ENCODE measurements at regions of chr19 and their contacts with region 1.

Region 1: DNA sequence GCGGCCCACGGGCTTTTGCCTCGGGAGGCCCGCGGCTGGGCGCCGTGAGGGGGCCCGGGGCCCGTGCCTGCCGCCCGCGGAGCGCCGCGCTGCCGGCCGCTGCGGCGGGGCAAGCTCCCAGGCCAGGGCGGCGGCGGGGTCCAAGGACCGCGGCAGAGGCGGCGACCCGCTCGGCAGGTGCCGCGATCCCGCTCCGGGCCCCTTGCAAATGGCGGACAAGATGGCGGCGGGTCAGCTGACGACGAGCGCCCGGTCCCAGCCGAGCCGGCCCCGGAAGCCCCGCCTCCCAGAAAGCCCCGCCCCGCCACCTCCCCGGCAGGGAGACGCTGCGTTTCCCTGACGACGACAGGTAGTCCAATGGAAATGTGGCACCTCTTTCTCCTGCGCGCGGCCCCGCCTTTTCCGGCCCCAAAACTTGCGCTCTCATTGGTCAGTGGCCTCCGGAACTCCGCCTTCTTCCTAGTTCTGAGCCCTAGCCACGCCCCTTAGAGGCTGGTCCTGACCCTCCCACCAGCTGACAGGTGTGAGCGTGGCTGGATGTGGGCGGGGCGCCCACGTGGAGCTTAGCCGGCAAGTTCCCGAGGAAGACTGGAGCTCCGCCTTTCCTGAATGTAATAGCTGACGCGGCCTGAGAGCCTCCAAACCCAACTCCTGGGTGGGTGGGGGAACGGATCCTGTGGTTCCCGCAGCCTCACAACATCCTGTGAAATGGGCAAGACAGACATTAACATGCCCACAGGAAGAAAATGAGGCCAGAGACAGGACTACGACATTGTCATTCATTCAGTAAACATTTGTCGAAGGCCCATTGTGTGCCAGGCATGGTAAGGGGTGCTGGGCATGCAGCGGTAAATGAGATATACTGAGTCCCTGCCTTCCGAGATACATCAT is at the start of gene AP3D1:
- DNase-seq: peak; percentile 100
- H3K4me3 Mint-ChIP-seq: peak within 1 kb of the TSS; percentile 84
- H3K27ac Mint-ChIP-seq: peak within 1 kb of the TSS; percentile 92
- H3K4me1 Mint-ChIP-seq: peaks cover 30% of the 10 kb centered on the region
- H3K27me3 Mint-ChIP-seq: no peaks in the 10 kb centered on the region
- total RNA-seq, gene AP3D1: 104 and 113 TPM in 2 replicates

Region 2: DNA sequence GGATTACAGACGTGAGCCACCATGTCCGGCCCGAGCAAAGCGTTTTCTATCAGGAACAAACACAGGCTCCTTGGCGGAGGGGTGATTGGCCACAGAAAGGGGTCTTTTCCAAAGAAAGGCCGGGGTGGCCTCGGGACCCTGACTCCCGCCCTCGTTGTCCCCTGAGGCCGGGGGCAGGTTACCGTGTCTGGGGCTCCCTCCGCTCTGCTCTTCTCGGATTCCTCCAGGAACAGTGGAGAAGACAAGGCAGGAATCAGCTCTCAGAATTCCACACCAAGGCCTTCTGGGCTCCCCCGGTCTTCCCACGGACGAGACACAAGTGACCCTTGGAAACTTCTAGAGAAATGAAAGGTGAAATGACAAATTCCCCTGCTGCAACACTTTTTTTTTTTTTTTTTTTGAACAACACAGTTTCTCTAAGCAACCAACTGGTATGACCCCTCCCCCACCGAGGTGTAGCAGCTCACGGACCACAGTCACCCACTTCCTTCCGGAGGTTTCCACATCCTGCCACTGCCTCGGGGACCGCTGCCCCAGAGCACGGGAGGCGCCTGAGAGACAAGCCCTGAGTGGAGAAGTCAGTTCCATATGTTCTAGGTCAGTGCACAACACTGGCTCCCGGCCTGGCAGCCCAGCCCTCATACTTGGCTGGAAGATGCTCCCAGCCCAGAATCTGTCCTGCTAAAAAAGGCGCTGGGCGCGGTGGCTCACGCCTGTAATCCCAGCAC is 66.4 kb before region 1 on chr19:
- intact Hi-C with region 1: loop called (anchors 1 kb)
- DNase-seq: peak; percentile 99
- H3K4me3 Mint-ChIP-seq: peak overlapping the region; percentile 98
- H3K27ac Mint-ChIP-seq: peak overlapping the region; percentile 100
- H3K4me1 Mint-ChIP-seq: peaks cover 65% of the 10 kb centered on the region
- H3K27me3 Mint-ChIP-seq: peaks cover 2% of the 10 kb centered on the region

Region 3: GRCh38 chr19:2236314-2237050 is 84.9 kb after region 1 on chr19 and contains the starts of genes PLEKHJ1 and SF3A2:
- intact Hi-C with region 1: loop called (anchors 1 kb)
- DNase-seq: peak; percentile 100
- H3K4me3 Mint-ChIP-seq: peak within 1 kb of the TSS; percentile 100
- H3K27ac Mint-ChIP-seq: peak within 1 kb of the TSS; percentile 100
- H3K4me1 Mint-ChIP-seq: peaks cover 55% of the 10 kb centered on the region
- H3K27me3 Mint-ChIP-seq: peaks cover 2% of the 10 kb centered on the region
- total RNA-seq, gene PLEKHJ1: 70.5 and 71.6 TPM in 2 replicates
- total RNA-seq, gene SF3A2: 159 and 171 TPM in 2 replicates

Region 4: GRCh38 chr19:2328401-2329148 is 177.0 kb after region 1 on chr19 and contains the starts of genes LSM7 and SPPL2B:
- intact Hi-C with region 1: loop called (anchors 2 kb)
- DNase-seq: peak; percentile 98
- H3K4me3 Mint-ChIP-seq: peak within 1 kb of the TSS; percentile 95
- H3K27ac Mint-ChIP-seq: peak within 1 kb of the TSS; percentile 97
- H3K4me1 Mint-ChIP-seq: peaks cover 51% of the 10 kb centered on the region
- H3K27me3 Mint-ChIP-seq: no peaks in the 10 kb centered on the region
- total RNA-seq, gene LSM7: 190 and 192 TPM in 2 replicates
- total RNA-seq, gene SPPL2B: 69.7 and 69.8 TPM in 2 replicates

Measured in activated CD4-positive, alpha-beta T cell treated with anti-CD3 and anti-CD28 coated beads, Interleukin-2, amount 10 ng/mL, durations not matched to agents 24 days and 14 days (primary cell).